Calu3 (cell line): ENCODE measurements at regions of chr6 and their contacts with region 1.

Region 1: DNA sequence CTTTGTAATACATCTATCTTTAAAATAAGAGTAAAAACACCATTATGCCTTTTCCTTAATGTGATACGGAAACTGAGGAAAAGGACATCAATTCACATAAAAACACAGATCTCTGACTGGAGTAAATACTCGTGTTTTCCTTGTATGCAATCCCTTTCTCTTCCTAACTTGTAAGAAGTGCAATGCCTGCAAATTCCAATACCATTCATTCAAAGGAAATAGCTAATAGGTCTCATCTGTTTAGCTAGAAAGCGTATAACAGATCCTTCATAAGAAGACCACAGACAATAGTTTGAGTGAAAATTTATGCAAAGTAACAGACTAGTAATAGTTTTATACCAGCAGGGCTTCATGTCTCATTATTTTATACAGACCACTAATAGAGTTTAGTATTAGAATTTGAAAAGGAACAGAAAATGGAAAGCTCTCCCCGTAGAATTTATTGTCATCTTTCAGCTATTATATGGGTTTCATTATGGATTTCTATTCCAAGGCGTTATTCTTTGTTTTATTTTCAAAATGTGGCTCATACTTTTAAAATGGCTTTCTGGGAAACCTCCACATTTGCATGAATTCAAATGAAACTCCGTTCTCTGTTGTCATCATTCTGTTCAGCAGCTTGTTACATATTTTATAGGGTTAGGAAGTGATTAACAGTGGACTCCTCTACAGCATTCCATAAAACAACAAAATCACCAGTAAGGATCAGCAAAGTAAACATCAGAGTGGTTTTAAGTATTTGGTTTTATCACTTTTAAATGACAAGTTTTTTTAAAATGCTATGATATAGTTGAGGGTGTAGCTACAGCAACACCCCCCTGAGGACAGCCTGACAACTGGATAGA is 186.7 kb downstream of the BTBD9 start:
- DNase-seq: no peak
- H3K4me3 Mint-ChIP-seq: no peak overlapping the region
- H3K27ac Mint-ChIP-seq: no peak overlapping the region
- H3K4me1 Mint-ChIP-seq: no peaks in the 10 kb centered on the region
- H3K27me3 Mint-ChIP-seq: no peaks in the 10 kb centered on the region
- CTCF ChIP-seq: no peak

Region 2: DNA sequence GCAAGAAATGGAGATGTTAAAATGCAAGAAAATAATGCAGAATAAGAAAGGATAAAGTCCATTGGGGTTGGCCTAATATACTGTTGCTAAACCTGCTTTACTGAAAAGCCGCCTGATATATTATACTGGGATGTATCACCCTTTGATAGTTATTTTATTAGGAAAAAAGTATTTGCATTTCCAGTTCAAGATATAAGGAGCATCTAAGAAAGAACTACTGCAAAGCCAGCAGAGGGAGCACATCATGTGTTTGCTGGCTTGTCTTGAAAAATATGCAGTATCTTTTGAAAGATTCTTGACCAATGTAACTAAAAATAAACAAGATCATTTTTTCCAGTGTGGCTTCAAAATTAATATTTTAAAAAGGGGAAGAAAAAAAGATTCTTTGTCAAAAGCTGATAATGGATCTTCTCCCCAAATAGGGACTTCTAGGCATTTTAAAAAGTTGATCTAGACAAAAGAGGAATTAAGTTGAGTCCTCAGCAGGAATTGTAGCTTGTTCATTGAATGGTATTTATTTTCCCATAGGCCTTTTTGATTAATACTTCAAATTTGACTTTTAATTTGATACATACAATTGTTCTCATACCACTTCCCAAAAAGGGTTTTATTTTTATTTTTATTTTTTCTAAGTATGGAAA is 418.6 kb before region 1 on chr6:
- CTCF ChIA-PET with region 1: no interaction called
- intact Hi-C with region 1: no loop called
- DNase-seq: no peak
- H3K4me3 Mint-ChIP-seq: no peak overlapping the region
- H3K27ac Mint-ChIP-seq: no peak overlapping the region
- H3K4me1 Mint-ChIP-seq: peaks cover 27% of the 10 kb centered on the region
- H3K27me3 Mint-ChIP-seq: no peaks in the 10 kb centered on the region
- CTCF ChIP-seq: peak; percentile 25

Region 3: GRCh38 chr6:38198219-38198618 is 254.8 kb before region 1 on chr6:
- CTCF ChIA-PET with region 1: no interaction called
- intact Hi-C with region 1: no loop called
- DNase-seq: no peak
- H3K4me3 Mint-ChIP-seq: no peak overlapping the region
- H3K27ac Mint-ChIP-seq: no peak overlapping the region
- H3K4me1 Mint-ChIP-seq: no peaks in the 10 kb centered on the region
- H3K27me3 Mint-ChIP-seq: no peaks in the 10 kb centered on the region
- CTCF ChIP-seq: no peak

Region 4: DNA sequence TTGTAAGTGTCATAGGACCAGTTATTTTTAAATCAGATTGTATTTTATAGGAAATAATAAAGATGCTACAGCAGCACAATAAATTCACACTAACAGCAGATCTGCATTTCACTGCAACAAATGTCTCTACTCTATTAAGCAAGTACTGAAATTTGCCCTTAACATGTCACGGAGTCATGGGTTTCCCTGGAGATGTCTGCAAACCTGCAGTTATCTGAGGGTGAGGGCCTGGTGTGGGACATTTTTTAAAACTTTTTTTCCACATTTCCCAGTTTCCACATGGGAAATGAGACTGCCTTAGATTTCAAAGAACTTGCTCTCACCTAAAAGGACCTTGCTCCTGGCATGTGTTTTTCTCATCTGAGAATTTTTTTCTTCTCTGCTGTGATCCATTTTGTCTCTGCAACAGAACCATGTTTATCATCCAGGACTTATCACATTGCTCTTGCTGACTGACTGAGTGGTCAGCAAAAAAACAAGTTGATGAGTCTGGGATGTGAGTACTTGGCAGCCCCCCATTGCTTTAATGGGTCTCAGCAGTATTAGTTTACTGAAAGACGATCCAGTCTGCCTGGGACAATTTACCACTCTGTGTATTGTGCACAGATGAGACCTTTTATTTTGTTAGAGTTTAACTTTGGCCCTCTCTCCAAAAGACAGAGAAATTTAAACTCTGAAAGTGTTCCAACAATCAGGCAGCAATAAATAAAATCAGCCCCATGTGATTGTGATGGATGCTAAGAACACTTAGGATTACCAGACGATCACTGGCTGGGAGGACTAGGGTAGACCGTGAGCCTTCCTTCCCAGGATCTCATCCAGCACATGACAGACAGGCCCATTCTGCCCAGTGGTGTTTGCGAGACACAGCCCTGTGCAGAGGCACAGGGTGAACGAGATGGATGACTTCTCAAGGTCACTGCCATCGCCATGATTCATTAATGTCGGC is 82.1 kb before region 1 on chr6:
- CTCF ChIA-PET with region 1: interaction called, 13 read pairs
- intact Hi-C with region 1: no loop called
- DNase-seq: no peak
- H3K4me3 Mint-ChIP-seq: no peak overlapping the region
- H3K27ac Mint-ChIP-seq: no peak overlapping the region
- H3K4me1 Mint-ChIP-seq: no peaks in the 10 kb centered on the region
- H3K27me3 Mint-ChIP-seq: no peaks in the 10 kb centered on the region
- CTCF ChIP-seq: no peak